ENCODE measurements at regions of chr9 and their contacts with region 1.

Region 1: GRCh38 chr9:71223953-71224538 is 102.6 kb upstream of the TRPM3 start:
- DNase-seq: no peak
- H3K4me3 ChIP-seq: no peak overlapping the region
- H3K27ac ChIP-seq: no peak overlapping the region
- H3K4me1 ChIP-seq: no peaks in the 10 kb centered on the region
- H3K27me3 ChIP-seq: no peaks in the 10 kb centered on the region
- CTCF ChIP-seq: no peak
- EP300 ChIP-seq: no peak
- POLR2A ChIP-seq: no peak

Region 2: DNA sequence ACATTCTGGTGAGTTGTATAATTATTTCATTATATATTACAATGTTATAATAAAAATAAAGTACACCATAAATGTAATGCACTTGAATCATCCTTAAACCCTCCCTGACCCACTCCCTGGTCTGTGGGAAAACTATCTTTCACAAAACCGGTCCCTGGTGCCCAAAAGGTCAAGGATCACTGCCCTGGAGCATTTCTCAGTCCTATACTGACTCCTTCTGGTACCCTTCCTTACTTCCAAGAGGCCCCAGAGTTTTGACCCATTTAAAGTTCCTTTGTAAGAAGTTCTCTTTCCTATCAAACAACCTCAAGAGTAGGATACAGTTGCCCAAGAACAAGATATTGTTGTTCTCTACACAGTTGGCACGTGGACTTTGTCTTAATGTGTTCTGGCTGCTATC is 13.7 kb before region 1 on chr9:
- in situ Hi-C with region 1: no loop called
- intact Hi-C with region 1: loop called (anchors 2 kb)
- DNase-seq: no peak
- H3K4me3 ChIP-seq: no peak overlapping the region
- H3K27ac ChIP-seq: no peak overlapping the region
- H3K4me1 ChIP-seq: no peaks in the 10 kb centered on the region
- H3K27me3 ChIP-seq: no peaks in the 10 kb centered on the region
- CTCF ChIP-seq: no peak
- EP300 ChIP-seq: no peak
- POLR2A ChIP-seq: no peak

Region 3: DNA sequence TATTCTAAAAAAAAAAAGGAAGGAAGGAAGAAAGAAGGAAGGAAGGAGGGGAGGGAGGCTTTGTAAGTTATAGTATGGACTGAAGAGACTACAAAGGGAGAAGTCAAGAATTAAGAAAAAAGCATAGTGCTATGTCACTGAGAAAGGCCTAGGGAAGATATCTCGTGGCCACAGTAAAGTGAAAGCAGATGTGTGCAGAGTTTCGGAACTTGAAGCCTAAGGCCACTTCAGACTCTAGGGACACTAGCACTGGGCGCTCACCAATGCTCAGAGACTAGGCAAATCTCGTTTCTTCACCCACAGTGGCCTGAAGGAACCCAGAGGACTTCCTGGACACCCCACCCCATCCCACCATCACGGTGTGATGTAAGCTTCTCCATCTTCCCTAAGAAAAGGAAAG is 78.7 kb after region 1 on chr9:
- in situ Hi-C with region 1: loop called in 1 of 4 experiments (anchors 25 kb)
- intact Hi-C with region 1: no loop called
- DNase-seq: no peak
- H3K4me3 ChIP-seq: no peak overlapping the region
- H3K27ac ChIP-seq: no peak overlapping the region
- H3K4me1 ChIP-seq: no peaks in the 10 kb centered on the region
- H3K27me3 ChIP-seq: no peaks in the 10 kb centered on the region
- CTCF ChIP-seq: no peak
- EP300 ChIP-seq: no peak
- POLR2A ChIP-seq: no peak

Measured in transverse colon (tissue), 4 donors.